ENCODE measurements at regions of chr1 and their contacts with region 1.

Region 1: GRCh38 chr1:244864253-244865027 is at the start of gene HNRNPU:
- DNase-seq: peak; percentile 99
- H3K4me3 Mint-ChIP-seq: peak within 1 kb of the TSS; percentile 98
- H3K27ac Mint-ChIP-seq: peak within 1 kb of the TSS; percentile 98
- H3K4me1 Mint-ChIP-seq: peaks cover 34% of the 10 kb centered on the region
- H3K27me3 Mint-ChIP-seq: no peaks in the 10 kb centered on the region
- total RNA-seq, gene HNRNPU: 611 and 612 TPM in 2 replicates

Region 2: DNA sequence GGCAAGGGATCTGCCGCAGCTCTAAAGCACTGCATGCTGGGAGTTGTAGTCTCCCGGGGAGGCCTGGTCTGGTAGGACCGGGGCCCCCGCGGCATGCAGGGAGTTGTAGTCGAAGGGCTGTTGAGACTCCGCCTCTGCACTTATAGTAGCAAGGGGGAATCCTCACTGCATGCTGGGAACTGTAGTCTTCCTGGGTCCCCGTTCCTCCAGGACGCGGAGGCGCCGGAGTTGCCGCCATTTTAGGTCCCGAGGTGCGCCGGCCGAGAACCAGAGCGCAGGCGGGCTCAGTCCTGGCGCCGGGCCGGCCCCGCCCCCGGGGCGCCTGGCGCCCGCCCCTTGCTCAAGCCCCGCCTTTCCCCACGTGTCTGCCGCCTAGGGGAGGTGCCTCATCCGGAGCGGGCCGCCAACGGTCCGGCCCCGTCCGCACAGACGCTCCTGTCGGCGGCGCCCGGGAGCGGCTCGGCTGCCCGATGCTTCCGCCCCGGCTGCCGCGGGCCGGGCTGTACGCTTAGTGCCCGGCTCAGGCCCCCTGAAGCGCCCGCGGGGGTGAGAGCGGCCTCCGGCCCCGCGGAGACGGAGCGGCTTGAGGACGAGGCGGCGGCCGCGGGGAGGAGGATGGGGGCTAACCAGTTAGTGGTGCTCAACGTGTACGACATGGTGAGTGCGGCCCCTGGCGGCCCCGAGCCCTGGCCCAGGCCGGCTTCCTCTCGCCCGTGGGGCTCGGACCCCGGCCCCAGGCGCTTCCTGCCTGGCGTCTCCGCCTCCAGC is 211.6 kb before region 1 on chr1 and contains the start of gene DESI2:
- intact Hi-C with region 1: loop called (anchors 1 kb)
- DNase-seq: peak; percentile 99
- H3K4me3 Mint-ChIP-seq: peak within 1 kb of the TSS; percentile 82
- H3K27ac Mint-ChIP-seq: peak within 1 kb of the TSS; percentile 84
- H3K4me1 Mint-ChIP-seq: peaks cover 23% of the 10 kb centered on the region
- H3K27me3 Mint-ChIP-seq: no peaks in the 10 kb centered on the region
- total RNA-seq, gene DESI2: 32.3 and 33.1 TPM in 2 replicates

Region 3: DNA sequence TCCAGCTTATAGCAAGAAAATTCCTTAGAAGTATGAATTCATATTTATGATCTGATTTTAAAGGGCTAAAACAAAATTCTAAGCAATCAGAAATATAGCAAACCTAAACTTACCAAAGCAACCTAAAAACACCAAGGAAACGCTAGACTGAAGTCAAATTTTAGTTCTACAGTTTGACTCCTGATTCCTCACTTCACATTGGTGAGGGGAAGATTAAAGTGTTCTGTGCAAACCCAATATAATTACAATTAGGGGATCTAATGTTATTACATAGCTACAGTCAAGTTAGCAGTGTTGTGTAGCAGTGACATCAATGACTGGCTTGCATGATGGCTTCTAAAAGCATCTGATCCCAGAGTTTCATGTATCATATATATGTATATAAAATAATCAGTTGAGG is 11.7 kb before region 1 on chr1:
- intact Hi-C with region 1: loop called (anchors 1 kb)
- DNase-seq: no peak
- H3K4me3 Mint-ChIP-seq: no peak overlapping the region
- H3K27ac Mint-ChIP-seq: no peak overlapping the region
- H3K4me1 Mint-ChIP-seq: peaks cover 65% of the 10 kb centered on the region
- H3K27me3 Mint-ChIP-seq: no peaks in the 10 kb centered on the region

Region 4: GRCh38 chr1:244970661-244971551 is 106.5 kb after region 1 on chr1:
- intact Hi-C with region 1: loop called (anchors 1 kb)
- DNase-seq: peak; percentile 97
- H3K4me3 Mint-ChIP-seq: peak overlapping the region; percentile 94
- H3K27ac Mint-ChIP-seq: peak overlapping the region; percentile 99
- H3K4me1 Mint-ChIP-seq: peaks cover 17% of the 10 kb centered on the region
- H3K27me3 Mint-ChIP-seq: peaks cover 3% of the 10 kb centered on the region

Region 5: DNA sequence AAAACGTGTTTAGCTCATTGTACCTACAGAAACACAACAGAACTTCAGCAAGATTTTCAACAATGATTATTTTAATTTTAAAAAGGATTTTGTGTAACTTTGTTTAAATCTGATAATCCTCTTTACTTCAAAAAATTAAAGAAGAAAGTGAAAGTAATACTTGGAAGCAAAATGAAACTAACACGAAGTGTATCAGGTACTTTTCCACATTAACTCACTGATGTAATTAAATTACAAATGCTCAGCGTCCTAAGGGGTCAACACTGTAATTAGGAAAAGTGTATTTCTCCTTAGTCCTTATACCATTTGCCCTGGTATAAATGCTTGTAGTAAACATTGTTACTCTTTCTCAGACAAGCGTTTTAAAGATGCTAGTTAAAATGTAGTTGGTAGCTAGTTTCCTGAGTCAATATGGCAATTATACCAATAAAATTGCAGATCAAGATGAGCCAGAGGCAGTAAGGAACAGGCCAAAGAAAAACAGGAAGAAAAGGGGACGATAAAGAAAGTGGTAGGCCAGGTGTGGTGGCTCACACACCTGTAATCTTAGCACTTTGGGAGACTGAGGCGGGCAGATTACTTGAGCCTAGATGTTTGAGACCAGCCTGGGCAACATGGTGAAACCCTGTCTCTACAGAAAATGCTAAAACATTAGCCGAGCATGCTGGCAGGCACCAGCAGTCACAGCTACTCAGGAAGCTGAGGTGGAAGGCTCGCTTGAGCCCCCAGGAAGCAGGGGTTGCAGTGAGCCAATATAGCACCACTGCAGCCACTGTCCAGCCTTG is 1089.6 kb after region 1 on chr1:
- intact Hi-C with region 1: loop called (anchors 5 kb)
- DNase-seq: peak; percentile 67
- H3K4me3 Mint-ChIP-seq: peak overlapping the region; percentile 86
- H3K27ac Mint-ChIP-seq: peak overlapping the region; percentile 88
- H3K4me1 Mint-ChIP-seq: peaks cover 20% of the 10 kb centered on the region
- H3K27me3 Mint-ChIP-seq: no peaks in the 10 kb centered on the region

Measured in activated CD4-positive, alpha-beta T cell treated with anti-CD3 and anti-CD28 coated beads, Interleukin-2, amount 10 ng/mL, durations not matched to agents 24 days and 14 days (primary cell).